Stomach (tissue), 19 donors: ENCODE measurements at regions of chr17 and their contacts with region 1.

Region 1: DNA sequence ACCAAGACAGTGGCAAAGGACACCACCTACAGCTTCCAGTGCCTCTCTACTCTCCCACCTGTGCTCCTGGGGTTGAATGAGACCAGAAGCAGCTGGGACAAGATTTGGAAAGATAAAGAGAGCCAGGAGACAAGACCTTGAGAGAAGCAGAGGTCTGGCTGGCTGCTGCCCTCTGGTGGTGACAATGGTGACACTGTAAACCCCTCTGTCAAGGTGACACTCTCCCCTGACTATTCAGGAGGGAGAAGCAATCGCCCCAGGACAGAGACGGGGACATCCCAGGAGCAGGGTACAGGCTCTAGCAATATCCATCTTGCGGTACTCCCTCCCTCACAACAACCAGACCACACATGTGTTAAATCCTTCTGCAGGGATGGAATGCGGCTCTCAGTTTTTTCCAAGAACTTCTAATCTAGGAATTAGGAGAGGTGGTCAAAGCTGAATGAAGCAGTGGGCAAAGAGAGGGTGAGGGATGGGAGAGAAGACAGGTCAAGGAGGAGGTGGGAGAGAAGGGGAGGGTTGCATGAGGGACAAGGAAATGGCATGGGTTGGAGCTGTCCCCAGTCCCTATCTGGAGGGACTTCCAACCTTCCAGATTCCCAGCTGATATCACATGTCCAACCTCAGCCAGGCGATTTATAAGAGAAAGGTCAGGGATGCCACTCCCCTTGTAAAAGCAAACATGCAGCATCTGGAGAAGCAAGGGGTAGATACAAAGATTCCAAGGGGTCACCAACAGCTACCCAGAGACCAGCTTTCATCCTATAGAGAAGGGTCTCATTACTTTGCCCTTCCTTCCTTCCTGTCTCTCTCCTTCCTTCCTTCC is 2.9 kb downstream of the PHOSPHO1 start:
- DNase-seq: peak; percentile 82 to 87
- H3K4me3 ChIP-seq: no peak overlapping the region
- H3K27ac ChIP-seq: no peak overlapping the region
- H3K4me1 ChIP-seq: peaks cover 23 to 55% (median 41%) of the 10 kb centered on the region in 4 donors
- H3K27me3 ChIP-seq: peaks cover 11 to 82% (median 55%) of the 10 kb centered on the region in 3 donors
- CTCF ChIP-seq: peak in 5 of 7 experiments; percentile 74 to 82 (median 77)
- EP300 ChIP-seq: no peak
- POLR2A ChIP-seq: no peak

Region 2: GRCh38 chr17:49162866-49163265 is 64.8 kb before region 1 on chr17:
- intact Hi-C with region 1: loop called (anchors 10 kb)
- DNase-seq: no peak
- H3K4me3 ChIP-seq: no peak overlapping the region
- H3K27ac ChIP-seq: no peak overlapping the region
- H3K4me1 ChIP-seq: no peaks in the 10 kb centered on the region
- H3K27me3 ChIP-seq: peaks cover 0 to 61% (median 0%) of the 10 kb centered on the region in 3 donors
- CTCF ChIP-seq: no peak
- EP300 ChIP-seq: no peak
- POLR2A ChIP-seq: no peak

Region 3: GRCh38 chr17:49180303-49180702 is 47.3 kb before region 1 on chr17:
- intact Hi-C with region 1: loop called (anchors 5 kb)
- DNase-seq: peak; percentile 60 to 73
- H3K4me3 ChIP-seq: no peak overlapping the region
- H3K27ac ChIP-seq: no peak overlapping the region
- H3K4me1 ChIP-seq: no peaks in the 10 kb centered on the region
- H3K27me3 ChIP-seq: peaks cover 0 to 10% (median 0%) of the 10 kb centered on the region in 3 donors
- CTCF ChIP-seq: peak in 4 of 7 experiments; percentile 44 to 69 (median 56)
- EP300 ChIP-seq: no peak
- POLR2A ChIP-seq: no peak

Region 4: DNA sequence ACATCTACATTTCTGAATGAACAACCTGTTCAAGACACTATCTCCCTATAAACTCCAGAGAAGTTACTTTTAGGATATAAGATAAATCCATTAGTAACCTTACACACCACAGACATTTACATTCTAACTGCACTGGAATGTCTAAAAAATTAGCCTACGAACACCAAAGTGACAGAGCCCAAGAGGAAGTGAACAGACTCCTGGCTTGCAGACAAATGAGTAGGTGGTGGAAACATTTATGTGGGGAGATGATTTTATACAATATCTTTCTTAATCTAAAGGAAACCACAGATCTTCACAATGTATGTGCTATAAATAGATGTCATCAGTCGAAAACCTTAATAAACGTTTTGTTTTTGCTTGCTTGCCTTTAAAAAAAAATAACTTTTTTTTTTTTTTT is 115.6 kb after region 1 on chr17:
- intact Hi-C with region 1: no loop called
- DNase-seq: peak in 1 of 2 donors; percentile 27
- H3K4me3 ChIP-seq: no peak overlapping the region
- H3K27ac ChIP-seq: peak overlapping the region in 1 of 5 donors; percentile 19
- H3K4me1 ChIP-seq: peaks cover 13 to 80% (median 48%) of the 10 kb centered on the region in 4 donors
- H3K27me3 ChIP-seq: no peaks in the 10 kb centered on the region
- CTCF ChIP-seq: no peak
- EP300 ChIP-seq: no peak
- POLR2A ChIP-seq: no peak

Region 5: GRCh38 chr17:49390548-49391324 is 163.1 kb after region 1 on chr17:
- intact Hi-C with region 1: no loop called
- DNase-seq: peak; percentile 58 to 67
- H3K4me3 ChIP-seq: no peak overlapping the region
- H3K27ac ChIP-seq: peak overlapping the region; percentile 57 to 87 (median 76)
- H3K4me1 ChIP-seq: peaks cover 33 to 63% (median 41%) of the 10 kb centered on the region in 4 donors
- H3K27me3 ChIP-seq: no peaks in the 10 kb centered on the region
- CTCF ChIP-seq: no peak
- EP300 ChIP-seq: no peak
- POLR2A ChIP-seq: no peak